Common myeloid progenitor, CD34-positive (primary cell): ENCODE measurements at regions of chr14 and their contacts with region 1.

Region 1: DNA sequence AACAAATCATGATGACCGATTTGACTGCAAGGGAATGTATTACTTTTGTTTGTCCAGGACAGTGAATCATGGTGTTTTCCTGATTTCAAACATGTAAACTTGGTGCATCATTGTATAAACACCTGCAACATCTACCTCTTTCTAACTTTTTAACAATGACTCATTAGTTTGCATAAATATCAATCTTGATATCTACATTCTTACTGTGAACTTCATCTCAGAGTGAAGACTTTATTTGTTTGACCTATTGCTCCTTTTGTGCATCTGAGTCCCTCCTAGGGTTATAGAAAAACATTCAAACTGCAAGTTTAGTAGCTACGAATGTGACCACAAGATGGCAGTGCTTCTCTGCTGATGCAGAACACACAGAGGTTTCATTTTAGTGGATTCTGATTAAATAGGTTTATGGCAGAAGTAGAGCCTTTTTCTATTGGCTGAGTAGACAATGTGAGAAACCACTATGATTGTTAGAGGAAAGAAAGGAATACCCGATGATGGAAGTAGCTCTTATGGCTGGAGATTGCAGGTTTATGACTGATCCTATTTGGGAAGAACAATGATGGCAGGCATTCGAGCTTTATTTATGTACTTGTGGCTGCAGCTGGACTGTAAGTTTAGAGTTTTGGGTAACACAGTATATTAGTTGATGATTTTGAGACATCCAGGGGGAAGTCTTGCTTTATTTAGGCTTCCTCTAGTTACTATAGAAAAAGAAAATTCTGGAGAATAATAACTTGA is 244.2 kb upstream of the OR4E1 start:
- DNase-seq: peak; percentile 76 to 85 (median 81)
- H3K4me3 ChIP-seq: peak overlapping the region in 3 of 7 experiments; percentile 28 to 63 (median 58)
- H3K27ac ChIP-seq: no peak overlapping the region
- H3K4me1 ChIP-seq: peaks cover 7 to 21% (median 11%) of the 10 kb centered on the region in 4 experiments
- H3K27me3 ChIP-seq: no peaks in the 10 kb centered on the region

Region 2: GRCh38 chr14:21802441-21802840 is 115.4 kb before region 1 on chr14:
- CTCF ChIA-PET with region 1: no interaction called
- POLR2A ChIA-PET with region 1: no interaction called
- DNase-seq: no peak
- H3K4me3 ChIP-seq: no peak overlapping the region
- H3K27ac ChIP-seq: no peak overlapping the region
- H3K4me1 ChIP-seq: no peaks in the 10 kb centered on the region
- H3K27me3 ChIP-seq: peaks cover 0 to 2% (median 0%) of the 10 kb centered on the region in 5 experiments

Region 3: GRCh38 chr14:21852061-21852664 is 65.7 kb before region 1 on chr14:
- CTCF ChIA-PET with region 1: interaction called, 16 read pairs
- POLR2A ChIA-PET with region 1: no interaction called
- DNase-seq: peak; percentile 60 to 72 (median 66)
- H3K4me3 ChIP-seq: peak overlapping the region in 5 of 7 experiments; percentile 8 to 63 (median 41)
- H3K27ac ChIP-seq: no peak overlapping the region
- H3K4me1 ChIP-seq: peaks cover 0 to 9% (median 5%) of the 10 kb centered on the region in 4 experiments
- H3K27me3 ChIP-seq: no peaks in the 10 kb centered on the region

Region 4: GRCh38 chr14:21868442-21869046 is 49.3 kb before region 1 on chr14:
- CTCF ChIA-PET with region 1: interaction called, 14 read pairs
- POLR2A ChIA-PET with region 1: no interaction called
- DNase-seq: peak; percentile 77 to 84 (median 80)
- H3K4me3 ChIP-seq: no peak overlapping the region
- H3K27ac ChIP-seq: no peak overlapping the region
- H3K4me1 ChIP-seq: peaks cover 2 to 15% (median 13%) of the 10 kb centered on the region in 4 experiments
- H3K27me3 ChIP-seq: no peaks in the 10 kb centered on the region

Region 5: GRCh38 chr14:21894003-21894897 is 23.6 kb before region 1 on chr14:
- CTCF ChIA-PET with region 1: interaction called, 19 read pairs
- POLR2A ChIA-PET with region 1: no interaction called
- DNase-seq: peak; percentile 39 to 63 (median 58)
- H3K4me3 ChIP-seq: no peak overlapping the region
- H3K27ac ChIP-seq: no peak overlapping the region
- H3K4me1 ChIP-seq: peaks cover 0 to 5% (median 2%) of the 10 kb centered on the region in 4 experiments
- H3K27me3 ChIP-seq: no peaks in the 10 kb centered on the region

Region 6: DNA sequence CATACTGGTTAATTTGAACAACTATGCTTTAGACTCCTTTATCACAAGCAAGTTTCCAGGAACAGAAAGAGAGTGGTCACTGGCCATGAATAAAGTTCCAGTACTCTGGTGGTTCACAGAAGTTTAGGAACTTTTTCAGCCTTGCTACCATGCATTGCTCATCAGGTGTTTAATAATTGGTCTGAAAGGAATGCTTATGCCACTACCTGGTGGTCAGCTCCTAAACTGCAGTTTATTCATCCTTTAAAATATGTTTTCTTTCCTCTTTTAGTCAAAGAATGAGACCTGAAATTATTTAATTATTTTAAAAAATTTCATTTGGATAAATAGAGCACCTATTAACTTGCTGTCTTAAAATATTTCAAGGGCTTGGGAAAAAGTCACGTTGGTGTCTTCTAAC is 15.8 kb after region 1 on chr14:
- CTCF ChIA-PET with region 1: interaction called, 72 read pairs
- POLR2A ChIA-PET with region 1: no interaction called
- DNase-seq: peak; percentile 43 to 56 (median 49)
- H3K4me3 ChIP-seq: no peak overlapping the region
- H3K27ac ChIP-seq: no peak overlapping the region
- H3K4me1 ChIP-seq: peaks cover 0 to 13% (median 5%) of the 10 kb centered on the region in 4 experiments
- H3K27me3 ChIP-seq: no peaks in the 10 kb centered on the region